Ascending aorta (tissue), 2 donors: ENCODE measurements at regions of chr10 and their contacts with region 1.

Region 1: DNA sequence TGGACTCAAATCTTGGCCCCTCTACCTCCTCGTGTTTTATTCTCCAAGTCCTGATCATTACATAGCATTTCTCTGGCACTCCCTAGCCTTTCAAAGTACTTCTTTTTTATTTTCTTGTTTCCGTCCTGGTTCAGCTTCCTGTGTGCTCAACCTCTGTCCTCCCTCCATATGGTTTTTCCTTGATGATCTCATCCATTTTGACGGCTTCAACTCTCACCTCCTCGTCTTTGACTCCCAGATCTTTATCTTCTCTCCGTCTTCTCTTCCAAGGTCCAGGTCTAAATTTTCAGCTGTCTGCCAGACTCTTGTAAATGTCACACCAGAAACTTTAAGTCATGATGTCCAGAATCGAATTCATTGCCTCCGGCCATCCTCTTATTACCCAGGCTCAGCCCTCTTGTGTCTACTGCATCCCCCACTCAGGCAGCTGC is 23.3 kb upstream of the GFRA1 start:
- DNase-seq: no peak
- H3K4me3 ChIP-seq: no peak overlapping the region
- H3K27ac ChIP-seq: no peak overlapping the region
- H3K4me1 ChIP-seq: no peaks in the 10 kb centered on the region
- H3K27me3 ChIP-seq: no peaks in the 10 kb centered on the region
- CTCF ChIP-seq: no peak

Region 2: DNA sequence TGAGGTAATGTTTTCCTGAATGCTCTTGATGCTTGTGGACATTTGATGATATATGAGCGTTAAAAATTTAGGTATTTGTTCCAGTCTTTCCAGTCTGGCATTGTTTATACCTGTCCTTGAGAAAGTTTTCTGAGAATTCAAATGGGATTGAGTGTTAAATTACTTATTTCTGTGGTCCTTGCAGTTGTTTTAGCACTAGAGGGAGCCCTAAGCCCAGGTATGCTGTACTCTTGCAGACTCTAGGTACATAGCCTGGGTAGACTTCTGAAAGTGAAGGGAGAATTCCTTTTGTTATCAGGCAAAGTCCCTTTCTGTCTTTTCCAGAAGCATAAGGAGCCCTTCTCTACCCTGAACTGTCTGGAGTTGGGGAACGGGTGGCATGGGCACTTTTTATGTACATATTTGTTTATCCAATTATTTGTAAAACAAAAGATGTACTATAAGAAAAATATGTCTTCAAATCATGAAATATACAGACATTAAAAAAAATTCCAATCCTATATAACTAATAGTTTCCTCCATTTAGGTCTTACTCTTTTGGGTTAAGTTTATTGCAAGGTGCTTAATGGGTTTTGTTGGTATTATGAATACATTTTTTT is 941.0 kb before region 1 on chr10:
- intact Hi-C with region 1: loop called (anchors 10 kb)
- DNase-seq: no peak
- H3K4me3 ChIP-seq: no peak overlapping the region
- H3K27ac ChIP-seq: no peak overlapping the region
- H3K4me1 ChIP-seq: no peaks in the 10 kb centered on the region
- H3K27me3 ChIP-seq: no peaks in the 10 kb centered on the region
- CTCF ChIP-seq: peak; percentile 29 to 64 (median 47)